H1 (cell line): ENCODE measurements at regions of chr19 and their contacts with region 1.

Region 1: GRCh38 chr19:3035542-3036118 is 6.5 kb upstream of the TLE2 start:
- DNase-seq: peak; percentile 94 to 95
- H3K4me3 ChIP-seq: peak overlapping the region; percentile 44 to 73 (median 57)
- H3K27ac ChIP-seq: peak overlapping the region; percentile 49; the same call in 1 of the 2 replicates
- H3K4me1 ChIP-seq: peaks cover 0 to 12% (median 9%) of the 10 kb centered on the region in 4 experiments; a peak in 6 of 7 replicates
- H3K27me3 ChIP-seq: peaks cover 3 to 28% (median 20%) of the 10 kb centered on the region in 4 experiments; a peak in 5 of 7 replicates
- CTCF ChIP-seq: no peak
- EP300 ChIP-seq: no peak
- POLR2A ChIP-seq: peak in 1 of 2 experiments; percentile 58; a peak in 2 of 3 replicates
- RAD21 ChIP-seq: no peak

Region 2: DNA sequence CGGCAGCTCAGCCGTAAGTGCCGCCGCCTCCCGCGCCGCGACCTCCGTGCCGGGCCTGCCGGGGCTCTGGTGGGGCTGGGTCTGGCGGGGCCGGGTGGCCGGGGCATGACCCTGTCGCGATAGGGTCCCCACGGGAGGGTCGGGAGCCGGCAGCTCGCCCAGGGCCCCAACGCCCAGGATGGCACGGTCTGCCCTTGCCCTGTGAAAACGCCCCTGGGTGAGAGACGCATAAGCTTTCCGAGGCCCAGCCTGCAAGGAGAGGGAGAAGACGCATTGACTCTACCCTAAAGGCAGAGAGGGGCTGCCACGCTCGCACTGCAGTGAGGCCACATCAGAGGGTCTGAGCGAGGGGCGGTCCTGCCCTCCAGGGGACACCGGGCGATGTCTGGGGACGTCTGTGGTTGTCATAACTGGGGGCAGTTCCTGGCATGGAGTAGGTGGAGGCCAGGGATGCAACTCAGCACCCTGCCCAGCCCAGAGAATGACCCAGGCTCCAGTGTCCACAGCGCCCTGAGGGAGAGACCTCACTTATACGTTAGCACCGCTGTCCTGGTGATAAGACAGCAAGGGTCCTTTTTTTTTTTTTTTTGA is 215.4 kb before region 1 on chr19:
- CTCF ChIA-PET with region 1: no interaction called
- POLR2A ChIA-PET with region 1: no interaction called
- DNase-seq: no peak
- H3K4me3 ChIP-seq: peak overlapping the region; percentile 64 to 78 (median 73)
- H3K27ac ChIP-seq: no peak overlapping the region
- H3K4me1 ChIP-seq: no peaks in the 10 kb centered on the region
- H3K27me3 ChIP-seq: no peaks in the 10 kb centered on the region
- CTCF ChIP-seq: no peak
- EP300 ChIP-seq: no peak
- POLR2A ChIP-seq: no peak
- RAD21 ChIP-seq: no peak

Region 3: GRCh38 chr19:2950286-2951124 is 85.1 kb before region 1 on chr19:
- CTCF ChIA-PET with region 1: interaction called, 19 read pairs
- POLR2A ChIA-PET with region 1: no interaction called
- DNase-seq: peak; percentile 99 to 100
- H3K4me3 ChIP-seq: peak overlapping the region; percentile 73 to 98 (median 90)
- H3K27ac ChIP-seq: peak overlapping the region; percentile 74
- H3K4me1 ChIP-seq: peaks cover 0 to 6% (median 4%) of the 10 kb centered on the region in 4 experiments; a peak in 4 of 7 replicates
- H3K27me3 ChIP-seq: no peaks in the 10 kb centered on the region
- CTCF ChIP-seq: peak in 1 of 3 experiments; percentile 11; a peak in 1 of 4 replicates
- EP300 ChIP-seq: no peak
- POLR2A ChIP-seq: peak; percentile 87 to 96
- RAD21 ChIP-seq: no peak

Region 4: DNA sequence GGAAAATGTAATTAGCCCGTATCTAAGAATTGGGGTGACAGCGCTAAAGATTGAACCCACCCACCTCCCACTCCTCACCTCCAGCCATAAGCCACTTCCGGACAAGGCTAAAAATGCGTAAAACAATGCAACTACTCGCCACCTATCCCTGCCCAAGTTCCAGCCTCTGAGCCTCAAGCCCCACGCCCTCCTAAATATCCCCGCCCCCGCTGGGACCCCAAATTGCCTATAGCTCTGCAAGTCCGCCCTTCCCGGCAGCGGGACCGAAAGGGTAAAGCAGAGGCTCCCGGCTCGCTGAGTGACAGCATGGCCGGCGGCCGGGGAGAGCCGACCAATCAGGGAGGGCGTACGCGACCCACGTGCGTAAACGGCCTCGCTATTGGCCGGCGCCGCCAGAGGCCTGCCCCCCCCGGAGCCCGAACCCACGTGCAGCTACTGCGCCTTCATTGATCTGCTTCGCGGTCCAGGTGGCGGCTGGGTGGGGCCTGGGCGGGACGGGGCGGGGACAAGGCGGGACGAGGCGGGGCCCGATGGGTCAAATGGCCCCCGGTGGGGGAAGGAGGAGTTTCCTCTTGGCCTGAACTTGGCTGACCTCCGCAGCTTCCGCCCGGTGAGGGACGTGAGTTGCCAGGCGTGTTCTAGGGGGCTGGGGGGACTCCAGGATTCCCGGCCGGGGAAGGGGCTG is 58.5 kb before region 1 on chr19 and contains the start of gene TLE6:
- CTCF ChIA-PET with region 1: interaction called, 6 read pairs
- POLR2A ChIA-PET with region 1: interaction called, 26 read pairs
- DNase-seq: peak; percentile 95 to 97
- H3K4me3 ChIP-seq: peak within 1 kb of the TSS; percentile 33 to 58 (median 42); a peak in 7 of 8 replicates
- H3K27ac ChIP-seq: no peak within 1 kb of the TSS
- H3K4me1 ChIP-seq: peaks cover 0 to 13% (median 7%) of the 10 kb centered on the region in 4 experiments; a peak in 5 of 7 replicates
- H3K27me3 ChIP-seq: peaks cover 0 to 13% (median 10%) of the 10 kb centered on the region in 4 experiments; a peak in 6 of 7 replicates
- CTCF ChIP-seq: no peak
- EP300 ChIP-seq: peak in 1 of 2 experiments; percentile 63; a peak in 1 of 3 replicates
- POLR2A ChIP-seq: no peak
- RAD21 ChIP-seq: no peak
- total RNA-seq, gene TLE6: 1.8 and 2.5 TPM in 2 replicates

Region 5: GRCh38 chr19:3024870-3025550 is 10.6 kb before region 1 on chr19:
- CTCF ChIA-PET with region 1: interaction called, 6 read pairs
- POLR2A ChIA-PET with region 1: interaction called, 20 read pairs
- DNase-seq: peak in 1 of 2 experiments; percentile 67
- H3K4me3 ChIP-seq: peak overlapping the region; percentile 4 to 46 (median 8); a peak in 5 of 8 replicates
- H3K27ac ChIP-seq: no peak overlapping the region
- H3K4me1 ChIP-seq: peaks cover 0 to 18% (median 13%) of the 10 kb centered on the region in 4 experiments; a peak in 6 of 7 replicates
- H3K27me3 ChIP-seq: peaks cover 9 to 43% (median 35%) of the 10 kb centered on the region in 4 experiments
- CTCF ChIP-seq: no peak
- EP300 ChIP-seq: no peak
- POLR2A ChIP-seq: no peak
- RAD21 ChIP-seq: no peak

Region 6: DNA sequence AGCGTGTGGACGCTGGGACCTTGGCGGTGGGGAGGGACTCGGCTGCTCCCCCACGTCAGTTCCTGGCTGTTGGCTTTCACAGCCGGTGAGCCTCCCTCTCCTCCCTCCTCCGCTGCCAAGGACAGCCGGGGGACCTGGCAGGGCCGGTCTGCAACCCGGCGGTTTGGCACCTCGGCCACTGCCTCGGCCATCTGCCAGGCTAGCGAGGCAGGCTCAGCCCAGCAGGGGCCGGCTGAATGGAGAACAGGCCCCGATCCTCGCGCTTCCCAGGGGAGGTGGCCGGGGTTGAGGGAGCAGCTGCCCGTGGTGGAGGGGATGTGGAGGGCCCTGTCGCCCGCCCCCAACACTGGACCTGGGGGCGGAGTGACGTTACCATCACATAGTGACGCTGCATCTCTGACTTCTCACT is 21.7 kb after region 1 on chr19:
- CTCF ChIA-PET with region 1: interaction called, 36 read pairs
- POLR2A ChIA-PET with region 1: interaction called, 25 read pairs
- DNase-seq: peak in 1 of 2 experiments; percentile 64
- H3K4me3 ChIP-seq: peak overlapping the region in 1 of 4 experiments; percentile 22; a peak in 2 of 8 replicates
- H3K27ac ChIP-seq: no peak overlapping the region
- H3K4me1 ChIP-seq: peaks cover 3 to 36% (median 27%) of the 10 kb centered on the region in 4 experiments
- H3K27me3 ChIP-seq: no peaks in the 10 kb centered on the region; a peak in 1 of 7 replicates
- CTCF ChIP-seq: no peak
- EP300 ChIP-seq: peak in 1 of 2 experiments; percentile 98; a peak in 1 of 3 replicates
- POLR2A ChIP-seq: no peak
- RAD21 ChIP-seq: no peak

Region 7: DNA sequence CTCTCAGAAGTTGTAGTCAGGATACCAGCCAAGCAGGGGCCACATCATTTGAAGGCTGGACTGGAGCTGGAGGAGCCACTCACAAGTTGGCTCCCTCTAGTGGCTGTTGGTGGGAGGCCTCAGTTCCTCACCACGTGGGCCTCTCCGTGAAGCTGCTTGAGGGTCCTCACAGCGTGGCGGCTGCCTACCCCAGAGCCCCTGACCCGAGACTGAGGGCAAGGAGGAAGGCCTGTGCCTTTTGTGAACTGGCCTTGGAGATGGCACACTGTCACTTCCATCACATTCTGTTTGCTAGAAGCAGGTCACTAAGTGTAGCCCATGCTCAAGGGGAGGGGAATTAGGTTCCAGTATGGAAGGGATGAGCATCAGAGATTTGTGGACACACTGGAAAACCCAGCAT is 73.1 kb after region 1 on chr19:
- CTCF ChIA-PET with region 1: interaction called, 10 read pairs
- POLR2A ChIA-PET with region 1: interaction called, 3 read pairs
- DNase-seq: peak; percentile 61 to 86
- H3K4me3 ChIP-seq: no peak overlapping the region
- H3K27ac ChIP-seq: no peak overlapping the region
- H3K4me1 ChIP-seq: peaks cover 0 to 5% (median 2%) of the 10 kb centered on the region in 4 experiments; a peak in 5 of 7 replicates
- H3K27me3 ChIP-seq: peaks cover 0 to 2% (median 0%) of the 10 kb centered on the region in 4 experiments; a peak in 1 of 7 replicates
- CTCF ChIP-seq: peak; percentile 74 to 97 (median 92)
- EP300 ChIP-seq: no peak
- POLR2A ChIP-seq: no peak
- RAD21 ChIP-seq: peak; percentile 49 to 59